Endothelial cell of umbilical vein (primary cell): ENCODE measurements at regions of chr20 and their contacts with region 1.

Region 1: GRCh38 chr20:34955232-34956040 is at the starts of genes GSS and MYH7B:
- DNase-seq: peak; percentile 99
- H3K4me3 ChIP-seq: peak within 1 kb of the TSS; percentile 58 to 84 (median 70)
- H3K27ac ChIP-seq: peak within 1 kb of the TSS; percentile 65
- H3K4me1 ChIP-seq: peaks cover 17% of the 10 kb centered on the region
- H3K27me3 ChIP-seq: no peaks in the 10 kb centered on the region
- CTCF ChIP-seq: peak; percentile 34 to 52
- POLR2A ChIP-seq: peak; percentile 56
- total RNA-seq, gene GSS: 46.9 and 47.9 TPM in 2 replicates
- total RNA-seq, gene MYH7B: 0.07 TPM in 1 of 2 replicates, not detected in the other

Region 2: GRCh38 chr20:34834459-34834893 is 121.0 kb before region 1 on chr20:
- CTCF ChIA-PET with region 1: interaction called, 8 read pairs
- POLR2A ChIA-PET with region 1: no interaction called
- dilution Hi-C with region 1: no loop called
- intact Hi-C with region 1: loop called (anchors 5 kb)
- DNase-seq: peak; percentile 50
- H3K4me3 ChIP-seq: no peak overlapping the region
- H3K27ac ChIP-seq: no peak overlapping the region
- H3K4me1 ChIP-seq: peaks cover 2% of the 10 kb centered on the region
- H3K27me3 ChIP-seq: peaks cover 16 to 25% of the 10 kb centered on the region in 2 experiments
- CTCF ChIP-seq: peak in 1 of 2 donors; percentile 18
- POLR2A ChIP-seq: no peak

Region 3: DNA sequence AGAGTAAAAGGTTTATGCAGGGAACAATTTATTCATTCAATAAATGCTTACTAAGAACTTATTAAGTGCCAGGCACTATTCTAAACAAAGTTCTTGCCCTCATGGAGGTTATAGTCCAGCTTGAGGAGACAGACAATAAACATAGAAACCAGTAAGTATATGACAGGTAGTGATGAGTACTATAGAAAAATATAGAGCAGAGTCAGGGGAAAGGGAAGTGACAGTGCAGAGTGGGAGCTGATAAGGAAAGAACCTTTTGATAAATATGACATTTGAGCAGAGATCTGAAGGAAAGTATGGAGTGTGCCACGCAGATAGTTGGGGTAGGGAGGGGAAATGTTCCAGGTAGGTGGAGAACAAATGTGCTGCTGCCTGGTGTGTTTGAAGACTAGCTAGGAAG is 67.0 kb before region 1 on chr20:
- CTCF ChIA-PET with region 1: interaction called, 4 read pairs
- POLR2A ChIA-PET with region 1: interaction called, 14 read pairs
- dilution Hi-C with region 1: no loop called
- intact Hi-C with region 1: no loop called
- DNase-seq: no peak
- H3K4me3 ChIP-seq: no peak overlapping the region
- H3K27ac ChIP-seq: no peak overlapping the region
- H3K4me1 ChIP-seq: peaks cover 3% of the 10 kb centered on the region
- H3K27me3 ChIP-seq: no peaks in the 10 kb centered on the region
- CTCF ChIP-seq: no peak
- POLR2A ChIP-seq: no peak

Region 4: DNA sequence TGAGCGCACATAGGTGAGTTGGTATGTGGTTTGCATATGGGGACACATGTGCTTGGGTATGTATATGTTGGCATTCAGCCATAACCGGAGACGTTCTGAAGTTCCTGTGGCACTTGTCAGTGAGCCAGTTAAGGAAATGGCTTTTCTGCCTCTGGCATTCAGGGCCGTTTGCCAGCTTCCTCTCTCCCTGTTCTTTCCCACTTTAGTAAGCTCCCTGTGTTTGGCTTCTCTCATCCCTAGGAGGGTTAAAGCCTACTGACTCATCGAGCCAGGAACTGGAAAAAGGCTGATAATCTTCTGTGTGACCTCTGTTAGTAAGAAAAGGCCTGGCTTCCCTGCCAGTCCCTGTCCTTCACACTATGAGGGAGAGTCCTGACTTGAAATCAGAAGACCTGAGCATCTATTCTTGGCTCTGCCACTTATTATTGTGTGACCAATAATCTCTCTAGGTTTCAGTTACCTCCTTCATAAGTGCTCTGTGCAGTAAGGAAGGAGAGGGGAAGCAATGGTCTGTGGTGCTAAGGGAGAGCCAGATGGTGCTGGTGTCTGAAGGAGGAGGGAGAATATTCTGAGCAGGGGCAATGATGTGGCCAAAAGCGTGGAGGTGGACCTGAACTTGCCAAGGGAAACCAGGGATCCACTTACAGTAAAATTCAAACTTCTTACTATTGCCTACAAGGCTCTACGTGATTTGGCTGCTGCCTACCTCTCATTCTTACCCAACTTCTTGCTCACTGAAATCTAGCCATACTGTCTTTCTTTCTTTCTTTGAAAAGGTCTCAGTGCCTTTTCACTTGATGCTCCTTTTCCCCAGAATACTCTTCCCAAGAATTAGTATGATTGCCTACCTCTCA is 47.6 kb before region 1 on chr20:
- CTCF ChIA-PET with region 1: interaction called, 6 read pairs
- POLR2A ChIA-PET with region 1: interaction called, 4 read pairs
- dilution Hi-C with region 1: no loop called
- intact Hi-C with region 1: loop called (anchors 1 kb)
- DNase-seq: peak; percentile 97
- H3K4me3 ChIP-seq: no peak overlapping the region
- H3K27ac ChIP-seq: peak overlapping the region; percentile 66
- H3K4me1 ChIP-seq: peaks cover 37% of the 10 kb centered on the region
- H3K27me3 ChIP-seq: no peaks in the 10 kb centered on the region
- CTCF ChIP-seq: no peak
- POLR2A ChIP-seq: peak; percentile 53